Heart left ventricle (tissue), 16 donors: ENCODE measurements at regions of chr19 and their contacts with region 1.

Region 1: GRCh38 chr19:20247016-20247683 is 80.1 kb downstream of the ZNF486 start:
- DNase-seq: no peak
- ATAC-seq: peak in 2 of 4 donors; percentile 52 to 62
- H3K4me3 ChIP-seq: no peak overlapping the region
- H3K27ac ChIP-seq: no peak overlapping the region
- H3K4me1 ChIP-seq: peaks cover 0 to 3% (median 0%) of the 10 kb centered on the region in 12 donors
- H3K27me3 ChIP-seq: no peaks in the 10 kb centered on the region
- CTCF ChIP-seq: peak in 11 of 12 donors; percentile 16 to 69 (median 53)
- POLR2A ChIP-seq: no peak

Region 2: DNA sequence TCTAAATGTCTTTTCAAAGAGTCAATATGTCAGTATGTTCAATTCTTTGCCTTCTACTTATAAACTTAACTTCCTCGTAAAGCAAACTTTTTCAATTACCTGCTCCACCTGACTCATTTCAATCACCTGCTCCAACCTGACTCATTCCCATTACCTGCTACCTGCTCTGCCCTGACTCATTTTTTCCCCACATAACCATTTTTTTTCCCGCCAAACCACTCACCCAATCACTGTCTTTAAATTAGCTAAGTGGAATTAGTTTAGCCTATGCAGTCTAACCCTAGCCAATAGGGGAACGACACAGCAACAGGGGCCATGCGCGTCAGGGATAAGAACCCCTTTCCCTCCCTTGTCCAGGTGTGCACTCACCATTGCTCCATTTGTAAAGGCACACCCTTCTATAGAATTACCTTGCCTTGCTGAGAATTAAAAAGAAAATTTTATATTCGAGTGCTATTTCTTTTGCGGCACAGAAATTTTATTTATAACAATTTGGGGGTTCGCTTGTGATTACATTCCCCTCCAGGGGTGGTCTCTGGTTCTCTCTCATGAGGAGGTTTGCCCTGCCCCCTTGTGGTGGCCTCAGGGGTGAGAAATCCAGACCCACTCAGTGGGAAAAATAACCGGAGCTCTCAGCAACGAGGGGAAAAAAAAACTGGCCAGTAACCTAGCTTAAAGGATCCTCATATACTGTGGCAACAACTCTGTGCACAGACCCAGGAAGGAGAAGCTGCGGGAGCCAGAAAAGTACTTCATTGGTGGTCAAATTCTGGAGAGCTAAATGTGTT is 113.0 kb after region 1 on chr19:
- intact Hi-C with region 1: loop called in 1 of 10 experiments (anchors 2 kb)
- DNase-seq: no peak
- ATAC-seq: no peak
- H3K4me3 ChIP-seq: no peak overlapping the region
- H3K27ac ChIP-seq: no peak overlapping the region
- H3K4me1 ChIP-seq: peaks cover 0 to 2% (median 0%) of the 10 kb centered on the region in 12 donors
- H3K27me3 ChIP-seq: no peaks in the 10 kb centered on the region
- CTCF ChIP-seq: peak in 5 of 12 donors; percentile 6 to 42 (median 39)
- POLR2A ChIP-seq: no peak

Region 3: GRCh38 chr19:21482863-21483276 is 1235.7 kb after region 1 on chr19:
- intact Hi-C with region 1: loop called in 1 of 10 experiments (anchors 10 kb)
- DNase-seq: peak; percentile 36 to 80 (median 62)
- ATAC-seq: peak; percentile 80 to 96 (median 92)
- H3K4me3 ChIP-seq: peak overlapping the region in 4 of 12 donors; percentile 7 to 38 (median 32)
- H3K27ac ChIP-seq: peak overlapping the region in 1 of 12 donors; percentile 44
- H3K4me1 ChIP-seq: no peaks in the 10 kb centered on the region
- H3K27me3 ChIP-seq: no peaks in the 10 kb centered on the region
- CTCF ChIP-seq: peak; percentile 65 to 95 (median 87)
- POLR2A ChIP-seq: no peak